H1 (cell line): ENCODE measurements at regions of chr4 and their contacts with region 1.

Region 1: DNA sequence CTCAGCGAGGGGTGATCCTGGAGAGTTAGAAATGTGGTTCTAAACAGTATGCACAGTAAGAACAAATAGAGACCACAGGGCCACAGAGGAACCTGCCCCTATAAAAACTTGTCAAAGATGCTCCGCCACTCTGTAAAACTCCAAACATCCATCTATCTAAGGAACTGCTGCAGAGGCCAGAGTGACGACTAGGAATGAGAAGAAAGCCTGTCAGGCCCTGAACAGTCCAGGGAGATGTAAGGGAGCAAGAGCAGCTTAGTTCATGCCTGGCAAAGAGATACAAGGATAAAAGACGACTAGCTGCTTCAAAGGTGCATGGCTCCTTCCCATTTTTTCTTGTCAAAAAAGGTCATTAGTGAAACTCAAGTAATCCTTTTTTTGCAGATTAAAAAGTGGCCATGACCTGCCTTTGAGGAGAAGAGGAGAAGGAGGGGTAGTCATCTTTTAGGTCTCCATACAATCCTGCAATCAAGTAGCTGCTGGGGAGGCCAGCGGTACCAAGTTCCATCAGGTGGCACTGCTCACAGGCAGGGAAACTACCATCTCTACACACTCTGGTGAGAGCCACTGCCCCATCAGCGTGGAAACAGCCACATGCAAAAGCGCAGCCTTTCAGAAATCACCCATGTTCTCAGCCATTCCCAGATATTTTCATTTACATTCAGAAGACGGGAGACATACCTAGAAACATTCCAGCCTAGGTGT is 162.1 kb downstream of the TSPAN5 start:
- DNase-seq: no peak
- H3K4me3 ChIP-seq: no peak overlapping the region
- H3K27ac ChIP-seq: no peak overlapping the region
- H3K4me1 ChIP-seq: peaks cover 0 to 6% (median 2%) of the 10 kb centered on the region in 4 experiments; a peak in 3 of 7 replicates
- H3K27me3 ChIP-seq: no peaks in the 10 kb centered on the region
- CTCF ChIP-seq: no peak
- EP300 ChIP-seq: no peak
- POLR2A ChIP-seq: no peak
- RAD21 ChIP-seq: no peak

Region 2: GRCh38 chr4:98482847-98483806 is 13.2 kb before region 1 on chr4:
- CTCF ChIA-PET with region 1: interaction called, 12 read pairs
- POLR2A ChIA-PET with region 1: no interaction called
- DNase-seq: no peak
- H3K4me3 ChIP-seq: no peak overlapping the region
- H3K27ac ChIP-seq: no peak overlapping the region
- H3K4me1 ChIP-seq: peaks cover 0 to 15% (median 8%) of the 10 kb centered on the region in 4 experiments; a peak in 4 of 7 replicates
- H3K27me3 ChIP-seq: no peaks in the 10 kb centered on the region
- CTCF ChIP-seq: no peak
- EP300 ChIP-seq: no peak
- POLR2A ChIP-seq: no peak
- RAD21 ChIP-seq: no peak

Region 3: DNA sequence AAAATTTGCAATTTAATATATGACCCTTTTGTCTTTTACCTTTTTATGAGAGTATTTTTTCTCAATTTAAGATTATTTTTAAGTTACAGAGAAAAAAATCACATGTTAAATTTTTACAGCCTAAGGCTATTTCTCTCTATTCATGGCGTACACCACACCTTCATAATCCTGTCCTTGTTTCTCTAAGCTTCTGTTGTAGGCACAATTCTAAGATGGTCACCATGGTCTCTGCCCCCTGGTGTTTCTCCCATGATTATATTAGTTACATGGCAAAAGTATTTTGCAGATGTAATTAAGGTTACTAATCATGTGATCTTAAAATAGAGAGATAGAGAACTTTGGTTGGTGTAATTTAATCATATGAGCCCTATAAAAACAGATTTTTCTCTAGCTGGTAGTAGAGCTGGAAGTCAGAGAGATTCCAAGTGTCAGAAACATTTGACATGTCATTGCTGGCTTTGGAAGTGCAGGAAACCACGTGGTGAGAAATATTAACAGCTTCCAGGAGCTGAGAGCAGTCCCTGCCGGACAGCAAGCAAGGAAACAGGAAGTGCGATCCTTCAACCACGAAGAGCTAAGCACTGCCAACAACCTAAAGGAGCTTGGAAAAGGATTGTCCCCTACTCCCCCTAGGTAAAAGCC is 342.8 kb after region 1 on chr4:
- CTCF ChIA-PET with region 1: no interaction called
- POLR2A ChIA-PET with region 1: no interaction called
- DNase-seq: no peak
- H3K4me3 ChIP-seq: no peak overlapping the region
- H3K27ac ChIP-seq: no peak overlapping the region
- H3K4me1 ChIP-seq: no peaks in the 10 kb centered on the region
- H3K27me3 ChIP-seq: no peaks in the 10 kb centered on the region
- CTCF ChIP-seq: no peak
- EP300 ChIP-seq: no peak
- POLR2A ChIP-seq: no peak
- RAD21 ChIP-seq: no peak